ENCODE measurements at regions of chr2 and their contacts with region 1.

Region 1: GRCh38 chr2:174546581-174547506 is 50.8 kb downstream of the WIPF1 start:
- DNase-seq: peak in 4 of 10 donors; percentile 15 to 59 (median 52)
- H3K4me3 ChIP-seq: no peak overlapping the region
- H3K27ac ChIP-seq: no peak overlapping the region
- H3K27me3 ChIP-seq: peaks cover 0 to 3% (median 0%) of the 10 kb centered on the region in 45 donors
- CTCF ChIP-seq: peak in 52 of 56 donors; percentile 21 to 72 (median 52)

Region 2: GRCh38 chr2:174428214-174428613 is 118.6 kb before region 1 on chr2:
- intact Hi-C with region 1: no loop called
- DNase-seq: no peak
- H3K4me3 ChIP-seq: no peak overlapping the region
- H3K27ac ChIP-seq: no peak overlapping the region
- H3K27me3 ChIP-seq: no peaks in the 10 kb centered on the region
- CTCF ChIP-seq: no peak

Region 3: DNA sequence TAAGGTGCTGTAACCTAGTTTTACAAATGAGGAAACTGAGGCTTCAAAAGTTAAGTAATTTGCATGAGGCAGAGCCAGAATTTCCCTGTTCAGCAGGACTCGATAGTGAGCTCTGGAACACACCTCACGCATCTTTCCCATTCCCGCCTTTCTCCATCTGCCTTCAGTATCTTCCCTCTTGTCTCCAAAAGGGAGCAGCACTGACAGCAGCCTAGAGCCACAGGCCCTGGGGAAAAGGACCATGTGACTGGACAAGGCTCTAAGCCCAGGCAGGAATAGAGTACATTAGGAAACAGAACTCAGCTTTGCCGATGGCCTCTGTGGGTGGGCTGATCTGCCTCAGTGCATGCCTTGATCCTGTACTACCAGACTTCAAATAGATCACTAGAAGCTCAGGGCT is 81.5 kb before region 1 on chr2:
- intact Hi-C with region 1: loop called (anchors 1 to 5 kb)
- DNase-seq: no peak
- H3K4me3 ChIP-seq: no peak overlapping the region
- H3K27ac ChIP-seq: no peak overlapping the region
- H3K27me3 ChIP-seq: no peaks in the 10 kb centered on the region
- CTCF ChIP-seq: peak in 4 of 56 donors; percentile 10 to 28 (median 16)